PC-3 (cell line): ENCODE measurements at regions of chr12 and their contacts with region 1.

Region 1: DNA sequence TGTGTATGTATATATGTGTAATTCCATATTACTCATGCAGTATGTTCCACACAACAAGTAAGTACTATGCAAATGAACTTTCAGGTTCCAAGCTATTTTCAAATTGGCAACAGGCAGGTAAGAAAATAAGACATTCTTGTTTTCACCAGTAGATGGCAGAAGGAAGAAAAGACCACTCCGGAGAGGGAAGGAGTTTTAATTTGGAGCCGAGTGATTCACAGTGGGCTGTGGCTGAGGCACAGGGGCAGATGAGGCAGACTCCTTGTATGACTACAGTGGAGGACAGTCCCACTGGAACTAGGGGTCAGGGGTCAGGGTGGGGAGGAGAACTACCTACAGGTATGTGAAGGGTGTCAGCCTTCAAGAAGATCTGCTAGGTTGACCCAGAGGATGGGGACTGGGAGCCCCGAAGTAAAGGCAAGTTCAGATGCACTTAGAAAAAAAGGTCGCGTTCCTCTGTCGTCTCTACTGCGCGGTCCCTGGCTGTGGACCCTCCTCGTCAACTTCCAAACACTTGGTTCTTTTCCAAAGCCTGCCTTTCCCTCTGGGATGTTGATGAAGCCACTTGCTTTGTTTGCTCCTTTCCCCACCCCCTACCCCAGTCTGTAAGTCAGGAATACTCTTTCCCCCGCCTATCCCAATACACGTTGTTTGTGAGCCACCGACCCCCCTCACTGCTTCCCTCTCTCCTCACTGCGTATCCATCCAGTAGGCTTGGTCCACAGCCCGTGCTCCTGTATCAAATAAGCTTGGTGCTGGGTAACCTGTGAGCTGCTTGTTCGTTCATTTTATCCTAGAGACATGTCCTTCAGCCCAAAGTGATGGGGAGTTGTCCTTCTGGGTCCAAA is 24.1 kb downstream of the DDX47 start:
- DNase-seq: peak; percentile 91
- ATAC-seq: peak; percentile 45
- H3K4me3 ChIP-seq: no peak overlapping the region
- H3K27ac ChIP-seq: peak overlapping the region; percentile 98
- H3K4me1 ChIP-seq: peaks cover 67% of the 10 kb centered on the region
- H3K27me3 ChIP-seq: no peaks in the 10 kb centered on the region
- CTCF ChIP-seq: peak; percentile 73

Region 2: DNA sequence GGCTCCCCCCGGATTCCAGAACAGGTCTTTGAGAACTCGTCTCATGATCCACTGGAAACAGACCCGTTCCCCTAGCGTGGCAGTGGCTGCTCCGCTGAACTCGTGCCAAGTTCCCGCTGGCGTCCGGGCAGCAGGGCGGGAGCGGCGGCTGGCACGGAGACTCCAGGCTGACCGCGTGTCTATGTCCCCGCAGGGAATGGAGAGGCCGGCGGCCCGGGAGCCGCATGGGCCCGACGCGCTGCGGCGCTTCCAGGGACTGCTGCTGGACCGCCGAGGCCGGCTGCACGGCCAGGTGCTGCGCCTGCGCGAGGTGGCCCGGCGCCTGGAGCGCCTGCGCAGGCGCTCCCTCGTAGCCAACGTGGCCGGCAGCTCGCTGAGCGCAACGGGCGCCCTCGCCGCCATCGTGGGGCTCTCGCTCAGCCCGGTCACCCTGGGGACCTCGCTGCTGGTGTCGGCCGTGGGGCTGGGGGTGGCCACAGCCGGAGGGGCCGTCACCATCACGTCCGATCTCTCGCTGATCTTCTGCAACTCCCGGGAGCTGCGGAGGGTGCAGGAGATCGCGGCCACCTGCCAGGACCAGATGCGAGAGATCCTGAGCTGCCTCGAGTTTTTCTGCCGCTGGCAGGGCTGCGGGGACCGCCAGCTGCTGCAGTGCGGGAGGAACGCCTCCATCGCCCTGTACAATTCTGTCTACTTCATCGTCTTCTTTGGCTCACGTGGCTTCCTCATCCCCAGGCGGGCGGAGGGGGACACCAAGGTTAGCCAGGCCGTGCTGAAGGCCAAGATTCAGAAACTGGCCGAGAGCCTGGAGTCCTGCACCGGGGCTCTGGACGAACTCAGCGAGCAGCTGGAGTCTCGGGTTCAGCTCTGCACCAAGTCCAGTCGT is 50.3 kb before region 1 on chr12:
- CTCF ChIA-PET with region 1: interaction called, 3 read pairs
- POLR2A ChIA-PET with region 1: no interaction called
- intact Hi-C with region 1: loop called (anchors 5 kb)
- DNase-seq: peak; percentile 77
- ATAC-seq: peak; percentile 76
- H3K4me3 ChIP-seq: peak overlapping the region; percentile 63
- H3K27ac ChIP-seq: peak overlapping the region; percentile 61
- H3K4me1 ChIP-seq: peaks cover 46% of the 10 kb centered on the region
- H3K27me3 ChIP-seq: no peaks in the 10 kb centered on the region
- CTCF ChIP-seq: no peak

Region 3: GRCh38 chr12:12819671-12820311 is 17.5 kb before region 1 on chr12:
- CTCF ChIA-PET with region 1: interaction called, 3 read pairs
- POLR2A ChIA-PET with region 1: interaction called, 3 read pairs
- intact Hi-C with region 1: loop called (anchors 2 kb)
- DNase-seq: peak; percentile 89
- ATAC-seq: peak; percentile 89
- H3K4me3 ChIP-seq: peak overlapping the region; percentile 3; the same call in 1 of the 2 replicates
- H3K27ac ChIP-seq: peak overlapping the region; percentile 81
- H3K4me1 ChIP-seq: peaks cover 66% of the 10 kb centered on the region
- H3K27me3 ChIP-seq: no peaks in the 10 kb centered on the region
- CTCF ChIP-seq: no peak

Region 4: GRCh38 chr12:12883369-12884001 is 46.2 kb after region 1 on chr12:
- CTCF ChIA-PET with region 1: interaction called, 5 read pairs
- POLR2A ChIA-PET with region 1: no interaction called
- intact Hi-C with region 1: loop called (anchors 2 kb)
- DNase-seq: peak; percentile 88
- ATAC-seq: peak; percentile 65
- H3K4me3 ChIP-seq: 0 out of 2 replicates have a peak overlapping the region, but pooled peaks have one; percentile 46
- H3K27ac ChIP-seq: peak overlapping the region; percentile 90
- H3K4me1 ChIP-seq: peaks cover 55% of the 10 kb centered on the region
- H3K27me3 ChIP-seq: no peaks in the 10 kb centered on the region
- CTCF ChIP-seq: no peak

Region 5: DNA sequence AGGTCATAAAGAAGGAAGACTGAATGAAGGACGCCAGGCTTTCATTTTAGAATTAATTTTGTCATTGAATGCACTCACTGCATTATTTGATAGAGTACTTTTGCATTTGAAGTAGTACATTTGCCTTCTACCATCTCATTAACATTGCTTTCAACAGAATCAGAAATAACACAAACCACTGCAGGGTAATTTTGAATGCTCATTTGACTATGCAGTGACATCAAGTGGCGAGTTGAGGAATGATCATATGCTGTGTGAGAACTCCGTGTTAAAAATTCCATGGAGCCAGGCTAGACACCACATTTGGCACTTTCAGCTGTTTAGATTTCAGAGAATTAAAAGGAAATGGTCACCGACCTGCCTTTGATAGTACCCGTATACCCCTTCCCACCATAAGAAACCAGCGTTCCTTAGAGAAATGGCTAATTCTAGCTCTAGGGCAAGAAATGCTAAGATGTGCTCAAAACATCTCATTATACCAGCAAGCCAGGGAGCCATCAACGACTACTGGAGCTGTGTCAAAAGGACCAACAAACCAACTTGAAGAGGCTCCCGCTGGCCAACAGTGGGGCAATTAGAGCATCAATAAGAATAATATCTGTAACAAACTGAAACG is 146.3 kb after region 1 on chr12:
- CTCF ChIA-PET with region 1: interaction called, 5 read pairs
- POLR2A ChIA-PET with region 1: no interaction called
- intact Hi-C with region 1: loop called (anchors 1 kb)
- DNase-seq: peak; percentile 63
- ATAC-seq: peak; percentile 38; the same call in 1 of the 2 replicates
- H3K4me3 ChIP-seq: no peak overlapping the region
- H3K27ac ChIP-seq: no peak overlapping the region
- H3K4me1 ChIP-seq: peaks cover 15% of the 10 kb centered on the region
- H3K27me3 ChIP-seq: no peaks in the 10 kb centered on the region
- CTCF ChIP-seq: peak; percentile 77

Region 6: DNA sequence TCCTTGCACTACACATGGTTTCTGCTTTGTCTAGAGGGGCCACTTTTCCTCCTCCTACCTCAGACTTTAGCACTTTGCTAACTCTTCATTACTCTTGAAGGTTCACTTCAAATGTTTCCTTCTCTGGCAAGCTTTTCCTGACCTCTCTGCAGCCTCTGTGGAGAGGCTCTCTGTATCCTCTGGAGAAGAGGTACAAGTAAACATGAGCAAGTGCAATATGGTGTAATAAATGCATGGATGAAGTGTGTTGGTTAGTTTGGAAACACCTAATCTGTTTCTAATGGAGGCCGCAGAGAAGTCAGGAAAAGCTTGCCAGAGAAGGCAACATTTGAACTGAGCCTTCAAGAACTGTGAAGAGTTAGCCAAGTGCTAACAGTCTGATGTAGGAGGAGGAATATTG is 814.9 kb after region 1 on chr12:
- CTCF ChIA-PET with region 1: no interaction called
- POLR2A ChIA-PET with region 1: no interaction called
- intact Hi-C with region 1: no loop called
- DNase-seq: no peak
- ATAC-seq: no peak
- H3K4me3 ChIP-seq: no peak overlapping the region
- H3K27ac ChIP-seq: no peak overlapping the region
- H3K4me1 ChIP-seq: no peaks in the 10 kb centered on the region
- H3K27me3 ChIP-seq: peaks cover 50% of the 10 kb centered on the region
- CTCF ChIP-seq: no peak